ENCODE measurements at regions of chr3 and their contacts with region 1.

Region 1: GRCh38 chr3:9503283-9503682 is 50.3 kb downstream of the LHFPL4 start:
- DNase-seq: no peak
- H3K4me3 ChIP-seq: no peak overlapping the region
- H3K27ac ChIP-seq: no peak overlapping the region
- H3K4me1 ChIP-seq: peaks cover 13 to 15% (median 14%) of the 10 kb centered on the region in 4 donors
- H3K27me3 ChIP-seq: peaks cover 0 to 49% (median 13%) of the 10 kb centered on the region in 4 donors
- CTCF ChIP-seq: peak; percentile 58 to 92 (median 70)
- EP300 ChIP-seq: no peak
- POLR2A ChIP-seq: no peak

Region 2: GRCh38 chr3:9316881-9317361 is 186.4 kb before region 1 on chr3:
- intact Hi-C with region 1: no loop called
- DNase-seq: no peak
- H3K4me3 ChIP-seq: peak overlapping the region; percentile 31 to 47 (median 40)
- H3K27ac ChIP-seq: peak overlapping the region; percentile 51 to 74 (median 62)
- H3K4me1 ChIP-seq: peaks cover 4 to 13% (median 5%) of the 10 kb centered on the region in 4 donors
- H3K27me3 ChIP-seq: no peaks in the 10 kb centered on the region
- CTCF ChIP-seq: no peak
- EP300 ChIP-seq: no peak
- POLR2A ChIP-seq: no peak

Region 3: DNA sequence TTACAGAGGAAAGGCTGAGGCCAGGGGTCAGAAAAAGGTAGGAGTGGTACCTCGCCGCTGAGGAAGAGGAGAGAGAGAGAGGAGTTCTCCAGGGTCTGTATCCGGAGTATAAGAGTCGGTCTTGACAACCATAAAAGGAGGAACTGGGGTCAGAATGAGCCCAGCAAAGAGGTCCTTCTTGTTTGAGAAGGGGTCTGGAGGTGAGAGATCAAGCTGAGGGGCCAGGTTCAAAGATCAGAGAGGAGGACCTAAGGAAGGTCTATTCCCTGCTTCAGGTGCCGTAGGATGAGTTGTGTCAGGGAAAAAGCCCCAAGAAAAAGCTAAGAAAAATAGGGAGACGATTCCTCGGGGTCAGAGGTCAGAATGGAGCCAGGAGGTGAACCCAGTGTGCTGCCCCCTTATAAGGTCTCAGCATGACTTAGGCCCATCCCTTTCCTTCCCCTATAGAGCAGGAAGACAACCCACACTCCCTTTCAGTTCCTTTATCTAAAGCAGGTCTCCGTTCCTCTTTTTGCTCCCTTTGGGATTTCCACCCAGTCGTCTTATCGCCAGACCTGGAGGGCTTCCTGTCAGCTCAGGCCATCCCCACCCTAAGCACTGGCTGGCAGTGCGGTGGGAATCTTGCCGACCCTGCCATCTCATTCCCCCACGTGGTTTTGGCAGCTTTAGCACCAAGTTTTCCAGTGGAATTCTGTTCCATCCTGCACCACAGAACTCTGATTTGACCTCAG is 146.7 kb after region 1 on chr3:
- intact Hi-C with region 1: loop called (anchors 10 kb)
- DNase-seq: no peak
- H3K4me3 ChIP-seq: peak overlapping the region; percentile 71 to 100 (median 98)
- H3K27ac ChIP-seq: peak overlapping the region; percentile 79 to 88 (median 84)
- H3K4me1 ChIP-seq: peaks cover 15 to 49% (median 28%) of the 10 kb centered on the region in 4 donors
- H3K27me3 ChIP-seq: no peaks in the 10 kb centered on the region
- CTCF ChIP-seq: no peak
- EP300 ChIP-seq: no peak
- POLR2A ChIP-seq: no peak